Activated CD4-positive, alpha-beta memory T cell treated with anti-CD3 and anti-CD28 coated beads for 36 hours (primary cell): ENCODE measurements at regions of chr1 and their contacts with region 1.

Region 1: DNA sequence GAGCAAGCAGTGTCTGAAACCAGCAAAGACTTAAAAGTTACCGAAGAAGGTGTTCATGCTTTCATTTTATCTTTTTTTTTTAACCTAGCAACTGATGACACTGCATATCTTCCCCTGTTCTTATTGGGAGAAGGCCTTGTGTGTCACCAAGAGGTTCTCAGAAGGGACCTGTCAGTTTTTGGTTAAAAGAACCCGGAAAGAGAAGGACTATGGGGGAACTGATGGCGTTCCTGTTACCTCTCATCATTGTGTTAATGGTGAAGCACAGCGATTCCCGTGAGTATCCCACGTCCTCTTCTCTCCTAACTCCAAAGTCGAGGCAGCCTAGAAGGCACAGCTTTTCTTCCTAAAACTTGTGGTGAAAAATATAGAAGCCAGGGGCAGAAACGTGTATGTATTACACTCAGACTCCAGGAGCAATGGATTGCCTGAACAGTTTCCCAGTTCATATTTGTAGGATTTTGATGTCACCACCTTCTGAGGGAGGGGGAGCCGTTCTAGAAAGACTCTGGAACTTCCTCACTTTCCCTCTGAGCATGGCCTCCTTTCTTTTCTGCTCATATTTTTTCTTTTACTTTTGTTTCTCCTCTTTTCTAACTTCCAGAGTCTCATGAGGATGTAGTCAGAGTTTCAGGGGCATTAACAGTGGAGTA is at the start of gene MR1:
- DNase-seq: peak; percentile 37
- H3K4me3 Mint-ChIP-seq: peak within 1 kb of the TSS; percentile 93
- H3K27ac Mint-ChIP-seq: peak within 1 kb of the TSS; percentile 97
- H3K4me1 Mint-ChIP-seq: peaks cover 52% of the 10 kb centered on the region
- H3K27me3 Mint-ChIP-seq: no peaks in the 10 kb centered on the region
- total RNA-seq, gene MR1: 19.5 to 21.2 TPM

Region 2: GRCh38 chr1:180734366-180734765 is 299.6 kb before region 1 on chr1:
- CTCF ChIA-PET with region 1: no interaction called
- POLR2A ChIA-PET with region 1: no interaction called
- intact Hi-C with region 1: no loop called
- DNase-seq: no peak
- H3K4me3 Mint-ChIP-seq: no peak overlapping the region
- H3K27ac Mint-ChIP-seq: no peak overlapping the region
- H3K4me1 Mint-ChIP-seq: no peaks in the 10 kb centered on the region
- H3K27me3 Mint-ChIP-seq: no peaks in the 10 kb centered on the region

Region 3: GRCh38 chr1:180975551-180975950 is 58.4 kb before region 1 on chr1:
- CTCF ChIA-PET with region 1: no interaction called
- POLR2A ChIA-PET with region 1: no interaction called
- intact Hi-C with region 1: no loop called
- DNase-seq: no peak
- H3K4me3 Mint-ChIP-seq: no peak overlapping the region
- H3K27ac Mint-ChIP-seq: no peak overlapping the region
- H3K4me1 Mint-ChIP-seq: peaks cover 26% of the 10 kb centered on the region
- H3K27me3 Mint-ChIP-seq: no peaks in the 10 kb centered on the region

Region 4: DNA sequence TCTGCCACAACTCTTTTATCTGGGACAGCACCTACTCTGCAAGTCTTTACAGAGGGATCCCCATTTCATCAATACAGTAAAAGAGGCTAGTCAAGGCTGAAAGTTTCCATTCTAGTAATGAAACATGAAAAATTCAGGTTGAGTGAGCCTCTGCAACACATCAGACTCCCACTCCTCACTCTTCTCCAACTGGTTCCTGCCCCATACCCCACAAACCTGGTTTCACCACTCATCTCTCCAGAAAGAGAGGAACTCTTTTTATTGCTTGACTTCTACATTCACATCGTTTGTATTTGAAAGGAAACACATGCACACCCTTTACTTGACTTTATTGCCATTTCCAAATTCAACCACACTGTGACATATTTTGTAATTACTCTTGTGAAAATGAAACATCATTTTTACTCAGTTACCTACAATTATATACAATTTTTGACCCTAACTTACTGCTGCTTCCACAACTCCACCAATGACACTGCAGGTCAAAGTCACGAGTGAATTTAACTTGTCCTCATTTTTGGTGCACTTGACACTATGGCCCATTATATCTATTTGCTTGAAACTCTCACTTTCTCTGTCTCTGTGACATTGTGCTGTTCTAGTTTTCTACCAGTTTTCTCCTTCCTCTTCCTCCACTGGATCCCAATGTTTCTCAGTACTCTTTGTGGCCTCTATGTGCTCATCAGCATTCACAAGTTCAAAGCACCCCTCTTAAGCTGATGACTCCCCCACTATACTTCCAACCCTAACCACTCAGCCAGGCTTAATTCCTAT is 19.3 kb before region 1 on chr1:
- CTCF ChIA-PET with region 1: interaction called, 5 read pairs
- POLR2A ChIA-PET with region 1: interaction called, 4 read pairs
- intact Hi-C with region 1: loop called (anchors 1 kb)
- DNase-seq: peak; percentile 55
- H3K4me3 Mint-ChIP-seq: no peak overlapping the region
- H3K27ac Mint-ChIP-seq: no peak overlapping the region
- H3K4me1 Mint-ChIP-seq: peaks cover 56% of the 10 kb centered on the region
- H3K27me3 Mint-ChIP-seq: no peaks in the 10 kb centered on the region

Region 5: DNA sequence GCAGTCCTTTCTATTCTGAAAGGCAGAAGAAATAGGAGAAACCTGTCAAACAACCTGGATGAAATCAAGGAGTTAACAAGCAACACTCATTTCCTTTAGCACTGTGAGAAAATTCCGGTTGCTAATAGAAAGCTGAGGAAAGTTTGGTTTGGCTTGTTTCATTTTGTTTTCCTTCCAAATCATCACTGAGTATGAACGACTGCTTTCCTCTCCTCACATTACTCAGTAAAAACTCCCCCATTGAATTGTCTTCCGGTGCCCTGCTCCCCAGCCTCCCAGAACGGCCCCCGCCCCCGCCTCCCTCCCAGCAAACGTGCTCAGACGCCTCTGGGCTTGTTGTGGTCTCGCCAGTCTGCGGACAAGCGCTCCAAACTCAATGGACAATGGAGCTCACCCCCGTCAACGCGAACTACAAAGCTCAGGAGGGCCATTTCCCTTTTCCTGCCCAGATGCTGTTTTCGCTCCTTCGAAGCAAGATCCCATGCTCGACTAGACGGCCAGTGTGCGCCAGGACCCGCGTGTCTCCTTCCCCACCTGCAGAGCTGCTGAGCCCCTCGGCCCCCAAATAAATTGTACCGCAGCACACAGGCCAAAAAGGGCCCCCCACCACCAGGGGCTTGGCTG is 12.0 kb before region 1 on chr1:
- CTCF ChIA-PET with region 1: interaction called, 35 read pairs
- POLR2A ChIA-PET with region 1: interaction called, 57 read pairs
- intact Hi-C with region 1: loop called (anchors 1 kb)
- DNase-seq: peak; percentile 84
- H3K4me3 Mint-ChIP-seq: peak overlapping the region; percentile 94
- H3K27ac Mint-ChIP-seq: peak overlapping the region; percentile 97
- H3K4me1 Mint-ChIP-seq: peaks cover 37% of the 10 kb centered on the region
- H3K27me3 Mint-ChIP-seq: no peaks in the 10 kb centered on the region

Region 6: DNA sequence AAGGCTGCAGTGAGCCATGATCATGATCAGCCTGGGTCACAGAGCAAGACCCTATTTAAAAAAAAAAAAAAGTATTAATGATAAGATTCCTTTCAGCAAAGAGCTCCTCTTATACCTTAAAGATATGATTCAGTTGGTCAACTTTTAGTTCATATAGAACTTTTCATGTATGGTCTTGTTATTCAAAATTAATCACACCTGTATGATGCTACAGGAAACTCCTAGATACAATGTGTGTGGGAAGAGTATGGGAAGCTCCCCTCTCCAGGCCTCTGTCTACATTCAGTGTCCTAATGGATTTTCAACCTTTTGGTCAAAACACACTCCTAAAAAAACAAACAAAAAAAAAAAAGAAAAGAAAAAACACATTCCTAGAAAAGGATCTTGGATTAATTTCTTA is 17.0 kb after region 1 on chr1:
- CTCF ChIA-PET with region 1: interaction called, 13 read pairs
- POLR2A ChIA-PET with region 1: no interaction called
- intact Hi-C with region 1: no loop called
- DNase-seq: no peak
- H3K4me3 Mint-ChIP-seq: no peak overlapping the region
- H3K27ac Mint-ChIP-seq: no peak overlapping the region
- H3K4me1 Mint-ChIP-seq: no peaks in the 10 kb centered on the region
- H3K27me3 Mint-ChIP-seq: no peaks in the 10 kb centered on the region

Region 7: DNA sequence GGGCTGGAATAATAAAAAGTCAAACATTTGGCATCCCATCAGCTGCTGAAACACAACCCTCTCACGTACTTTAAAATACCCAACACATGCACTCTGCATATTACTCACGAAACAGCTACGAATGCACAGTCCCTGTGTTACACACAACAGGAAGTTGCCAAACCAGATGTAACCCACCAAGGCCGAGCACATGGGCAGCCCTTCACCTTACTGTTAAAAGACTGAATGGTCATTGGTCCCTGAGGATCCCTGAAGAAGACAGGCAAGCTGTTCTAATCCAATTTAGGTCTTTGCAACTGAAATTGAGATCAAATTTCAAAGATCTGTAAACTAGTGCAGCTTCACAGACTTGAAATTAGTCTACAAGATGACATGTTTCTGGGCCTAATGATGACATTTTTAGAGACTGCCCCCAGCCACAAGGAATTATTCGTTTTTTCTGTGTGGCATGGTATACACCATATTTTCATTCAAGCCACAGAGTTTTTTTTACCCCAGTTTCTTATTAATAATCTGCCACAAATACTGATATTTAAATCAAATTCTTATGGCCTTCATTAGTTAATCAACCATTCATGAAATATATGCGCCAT is 29.0 kb after region 1 on chr1:
- CTCF ChIA-PET with region 1: interaction called, 12 read pairs
- POLR2A ChIA-PET with region 1: interaction called, 5 read pairs
- intact Hi-C with region 1: no loop called
- DNase-seq: peak; percentile 61
- H3K4me3 Mint-ChIP-seq: peak overlapping the region; percentile 58
- H3K27ac Mint-ChIP-seq: peak overlapping the region; percentile 78
- H3K4me1 Mint-ChIP-seq: peaks cover 20% of the 10 kb centered on the region
- H3K27me3 Mint-ChIP-seq: no peaks in the 10 kb centered on the region

Region 8: GRCh38 chr1:181166377-181167196 is 132.7 kb after region 1 on chr1:
- CTCF ChIA-PET with region 1: interaction called, 18 read pairs
- POLR2A ChIA-PET with region 1: no interaction called
- intact Hi-C with region 1: loop called (anchors 1 kb)
- DNase-seq: peak; percentile 80
- H3K4me3 Mint-ChIP-seq: no peak overlapping the region
- H3K27ac Mint-ChIP-seq: no peak overlapping the region
- H3K4me1 Mint-ChIP-seq: peaks cover 3% of the 10 kb centered on the region
- H3K27me3 Mint-ChIP-seq: no peaks in the 10 kb centered on the region

Region 9: DNA sequence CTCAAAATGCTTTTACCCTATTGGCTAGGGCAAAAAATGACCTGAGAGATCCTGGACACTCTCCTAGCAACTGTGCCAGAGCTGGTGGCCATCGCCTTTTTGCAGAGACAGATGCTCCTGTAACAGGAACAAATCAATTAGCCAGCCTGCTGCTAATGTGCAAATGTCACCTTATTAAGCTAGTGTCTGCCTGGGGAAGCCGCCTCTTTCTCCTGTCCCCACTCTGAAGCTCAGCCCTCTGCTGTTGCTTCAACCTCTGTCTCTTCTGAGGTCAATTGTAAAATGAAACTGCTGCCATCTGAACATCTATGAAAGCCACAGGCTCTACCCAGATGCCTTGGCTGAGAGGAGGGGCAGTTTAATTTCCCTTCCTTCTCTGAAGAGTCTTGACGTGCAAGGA is 363.9 kb after region 1 on chr1:
- CTCF ChIA-PET with region 1: no interaction called
- POLR2A ChIA-PET with region 1: no interaction called
- intact Hi-C with region 1: loop called (anchors 10 kb)
- DNase-seq: peak; percentile 39
- H3K4me3 Mint-ChIP-seq: no peak overlapping the region
- H3K27ac Mint-ChIP-seq: peak overlapping the region; percentile 53
- H3K4me1 Mint-ChIP-seq: peaks cover 38% of the 10 kb centered on the region
- H3K27me3 Mint-ChIP-seq: no peaks in the 10 kb centered on the region